Spleen (tissue), 13 donors: ENCODE measurements at regions of chr18 and their contacts with region 1.

Region 1: GRCh38 chr18:70907673-70908072 is 618.8 kb downstream of the SOCS6 start:
- DNase-seq: no peak
- H3K4me3 ChIP-seq: no peak overlapping the region
- H3K27ac ChIP-seq: no peak overlapping the region
- H3K4me1 ChIP-seq: no peaks in the 10 kb centered on the region
- H3K27me3 ChIP-seq: no peaks in the 10 kb centered on the region
- CTCF ChIP-seq: no peak
- POLR2A ChIP-seq: no peak

Region 2: GRCh38 chr18:69916412-69916811 is 991.3 kb before region 1 on chr18:
- intact Hi-C with region 1: no loop called
- DNase-seq: no peak
- H3K4me3 ChIP-seq: no peak overlapping the region
- H3K27ac ChIP-seq: no peak overlapping the region
- H3K4me1 ChIP-seq: peaks cover 0 to 3% (median 0%) of the 10 kb centered on the region in 6 donors
- H3K27me3 ChIP-seq: no peaks in the 10 kb centered on the region
- CTCF ChIP-seq: no peak
- POLR2A ChIP-seq: no peak

Region 3: DNA sequence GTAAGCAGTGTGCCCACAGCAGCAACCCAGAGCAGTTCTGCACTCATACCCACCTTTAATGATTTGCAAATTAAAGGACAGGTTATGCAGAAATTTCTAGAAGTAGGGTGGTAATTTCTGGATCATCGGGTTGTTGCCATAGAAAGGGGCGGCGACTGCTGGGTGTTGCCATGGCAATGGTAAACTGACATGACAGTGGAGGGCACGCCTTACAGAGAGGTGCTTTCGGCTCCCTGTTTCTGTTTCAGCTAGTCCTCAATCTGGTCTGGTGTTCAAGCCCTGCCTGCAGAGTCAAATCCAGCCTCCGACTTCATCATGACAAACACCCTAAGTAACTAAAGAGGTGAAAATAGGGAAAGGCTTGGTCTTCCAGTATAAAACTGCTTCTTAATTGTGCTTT is 48.9 kb after region 1 on chr18:
- intact Hi-C with region 1: loop called (anchors 10 kb)
- DNase-seq: no peak
- H3K4me3 ChIP-seq: no peak overlapping the region
- H3K27ac ChIP-seq: no peak overlapping the region
- H3K4me1 ChIP-seq: no peaks in the 10 kb centered on the region
- H3K27me3 ChIP-seq: no peaks in the 10 kb centered on the region
- CTCF ChIP-seq: no peak
- POLR2A ChIP-seq: no peak